ENCODE measurements at regions of chr17 and their contacts with region 1.

Region 1: GRCh38 chr17:1648963-1649843 is 463 bp downstream of the RILP start:
- DNase-seq: peak; percentile 98

Region 2: GRCh38 chr17:1267471-1267947 is 381.7 kb before region 1 on chr17:
- intact Hi-C with region 1: loop called (anchors 10 kb)
- DNase-seq: no peak

Region 3: GRCh38 chr17:1573916-1574696 is 75.1 kb before region 1 on chr17:
- intact Hi-C with region 1: loop called (anchors 2 kb)
- DNase-seq: peak; percentile 93

Region 4: DNA sequence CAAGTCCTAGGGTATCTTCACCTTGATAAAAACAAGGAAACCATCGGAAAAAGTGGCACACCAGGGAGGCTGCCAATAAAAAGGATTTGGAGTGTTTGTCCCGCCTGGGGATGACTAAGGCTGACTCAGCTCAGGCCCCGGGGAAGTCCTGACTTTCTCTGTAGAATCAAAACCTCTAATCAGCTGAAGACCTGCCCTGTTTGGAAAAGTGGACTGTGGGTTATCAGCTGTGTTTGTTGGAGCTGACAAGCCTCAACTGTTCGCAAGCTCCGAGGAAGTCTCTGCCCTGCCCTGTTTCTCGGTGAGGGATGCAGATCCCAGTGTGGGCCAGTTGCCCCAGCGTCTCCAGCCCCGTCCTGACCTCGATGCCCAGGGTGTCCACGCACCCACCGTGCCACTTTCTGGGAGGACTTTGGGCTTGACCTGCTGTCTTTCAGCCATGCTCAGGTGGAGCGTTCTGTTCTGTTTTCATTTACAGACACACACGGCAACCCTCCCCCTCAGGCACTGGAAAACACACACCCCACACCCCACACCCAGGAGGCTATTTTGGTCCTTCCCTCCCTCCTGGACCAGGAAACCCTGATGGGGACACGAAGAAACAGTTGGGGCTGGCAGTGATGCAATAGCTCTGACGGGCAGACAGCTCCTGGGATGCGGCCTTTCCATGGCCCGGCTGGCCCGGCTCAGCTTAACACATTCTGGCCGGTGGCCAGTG is 59.0 kb before region 1 on chr17:
- intact Hi-C with region 1: no loop called
- DNase-seq: no peak

Region 5: DNA sequence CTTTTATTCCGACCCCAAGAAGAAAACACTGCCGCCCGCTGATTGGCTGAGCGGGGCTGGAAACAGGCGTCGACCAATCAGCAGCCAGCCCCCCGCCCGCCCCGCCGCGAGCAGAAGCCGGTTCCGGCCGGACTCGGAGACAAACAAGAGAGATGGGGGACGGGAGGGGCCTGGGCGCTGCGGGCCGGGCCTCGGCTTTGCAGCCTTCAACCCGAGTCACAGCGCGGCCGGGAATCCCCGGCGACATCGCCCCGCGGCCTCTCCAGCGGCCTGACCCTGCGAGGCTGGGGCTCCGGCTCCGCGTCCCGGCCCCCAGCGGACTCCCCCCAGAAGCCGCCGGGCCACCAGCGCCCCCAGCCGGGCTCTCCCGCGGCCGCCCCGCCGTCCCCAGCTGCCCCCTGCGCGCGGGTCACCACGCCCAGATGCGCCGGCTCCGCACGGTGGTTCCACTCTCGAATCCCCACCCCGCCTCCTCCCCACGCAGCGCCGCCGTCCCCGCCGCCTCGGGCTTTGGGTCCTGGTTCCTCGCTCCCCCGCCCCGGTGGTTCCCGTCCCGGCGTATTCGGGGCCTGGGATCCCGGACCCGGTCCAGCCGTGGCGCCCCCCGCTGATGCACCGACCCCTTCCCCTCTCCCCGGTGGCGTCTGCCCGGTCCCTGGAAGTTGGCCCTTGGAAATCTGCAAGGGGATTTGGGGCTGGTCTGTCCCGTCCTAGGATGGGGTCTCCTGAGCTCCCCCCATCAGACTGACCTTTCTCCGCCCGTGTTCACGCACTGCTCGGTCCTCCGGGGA is 20.2 kb before region 1 on chr17:
- intact Hi-C with region 1: loop called (anchors 2 kb)
- DNase-seq: peak; percentile 97

Region 6: GRCh38 chr17:1673041-1673785 is 24.0 kb after region 1 on chr17:
- intact Hi-C with region 1: loop called (anchors 2 kb)
- DNase-seq: no peak